ENCODE measurements at regions of chr6 and their contacts with region 1.

Region 1: DNA sequence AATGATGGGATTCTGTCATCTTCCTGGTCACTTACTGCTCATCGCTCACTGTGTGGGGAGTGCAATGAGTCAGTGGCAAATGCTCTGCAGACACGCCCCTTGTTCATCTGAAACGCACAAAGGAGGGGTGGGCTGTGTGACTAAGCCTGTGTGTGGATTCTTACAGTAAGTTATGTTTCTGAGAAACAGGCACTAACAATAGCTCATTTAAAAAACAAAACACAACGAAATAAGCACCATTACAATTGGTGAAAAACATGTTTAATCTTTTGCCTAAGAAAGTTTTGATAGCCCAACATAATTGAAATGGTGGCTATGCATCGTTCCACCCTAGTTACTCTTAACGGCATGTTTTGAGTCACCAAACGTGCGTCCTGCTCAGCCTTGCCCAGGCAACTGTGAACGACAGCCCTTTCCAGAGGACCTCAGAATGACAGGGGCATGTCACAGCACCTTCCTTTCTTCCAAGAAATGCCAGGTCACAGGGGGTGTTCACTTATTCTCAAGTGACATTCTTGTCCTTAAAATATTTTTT is 118.4 kb upstream of the SGK1 start:
- DNase-seq: peak; percentile 64
- H3K4me3 Mint-ChIP-seq: peak overlapping the region; percentile 54
- H3K27ac Mint-ChIP-seq: peak overlapping the region; percentile 96
- H3K4me1 Mint-ChIP-seq: peaks cover 37% of the 10 kb centered on the region
- H3K27me3 Mint-ChIP-seq: no peaks in the 10 kb centered on the region

Region 2: GRCh38 chr6:134288538-134289203 is 147.7 kb before region 1 on chr6:
- intact Hi-C with region 1: loop called (anchors 1 kb)
- DNase-seq: peak; percentile 15
- H3K4me3 Mint-ChIP-seq: peak overlapping the region; percentile 28
- H3K27ac Mint-ChIP-seq: peak overlapping the region; percentile 96
- H3K4me1 Mint-ChIP-seq: peaks cover 32% of the 10 kb centered on the region
- H3K27me3 Mint-ChIP-seq: no peaks in the 10 kb centered on the region

Region 3: DNA sequence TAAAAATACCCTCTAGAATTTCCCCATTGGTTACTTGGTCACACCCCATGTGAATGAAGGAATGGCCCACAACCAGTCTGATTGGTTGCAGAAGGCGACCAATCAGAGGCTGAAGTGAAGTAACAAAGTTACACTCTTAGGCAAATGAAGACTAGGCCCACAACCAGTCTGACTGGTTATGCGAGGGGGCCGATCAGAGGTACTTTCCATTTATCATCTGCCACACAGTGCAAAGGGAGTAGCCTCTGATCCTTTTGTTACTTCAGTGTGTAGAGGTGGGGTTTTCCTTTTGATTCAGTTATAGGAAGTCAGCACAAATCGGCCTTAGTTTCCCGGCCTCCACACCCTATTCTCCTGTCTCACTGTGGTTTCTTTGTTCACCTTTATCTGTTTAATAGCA is 57.3 kb before region 1 on chr6:
- intact Hi-C with region 1: loop called (anchors 1 kb)
- DNase-seq: peak; percentile 21
- H3K4me3 Mint-ChIP-seq: no peak overlapping the region
- H3K27ac Mint-ChIP-seq: peak overlapping the region; percentile 79
- H3K4me1 Mint-ChIP-seq: peaks cover 35% of the 10 kb centered on the region
- H3K27me3 Mint-ChIP-seq: no peaks in the 10 kb centered on the region

Region 4: DNA sequence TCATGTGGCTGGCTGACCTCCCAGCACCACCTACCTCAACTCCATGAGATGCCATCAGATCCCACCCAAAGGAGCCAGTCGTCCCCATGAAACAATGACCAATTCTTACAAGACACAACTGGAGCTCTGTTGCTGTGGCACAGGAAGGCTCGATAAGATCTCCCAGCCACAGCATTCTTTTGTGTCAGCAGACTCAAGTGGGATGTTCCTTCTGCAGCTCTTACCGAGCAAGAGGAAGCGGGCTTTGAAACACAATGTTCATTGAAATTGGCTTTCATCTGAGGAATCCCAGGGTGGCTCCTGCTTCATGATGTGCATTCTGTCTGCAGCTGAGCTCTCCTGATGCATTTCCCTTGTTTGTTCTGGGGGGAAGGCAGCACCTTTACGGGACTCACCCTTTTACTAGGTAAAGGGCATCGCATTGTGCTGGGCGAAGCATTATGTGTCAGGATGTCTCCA is 103.5 kb after region 1 on chr6:
- intact Hi-C with region 1: loop called (anchors 1 kb)
- DNase-seq: peak; percentile 19
- H3K4me3 Mint-ChIP-seq: peak overlapping the region; percentile 65
- H3K27ac Mint-ChIP-seq: peak overlapping the region; percentile 23
- H3K4me1 Mint-ChIP-seq: peaks cover 36% of the 10 kb centered on the region
- H3K27me3 Mint-ChIP-seq: no peaks in the 10 kb centered on the region

Region 5: GRCh38 chr6:134822920-134823709 is 386.8 kb after region 1 on chr6:
- intact Hi-C with region 1: loop called (anchors 2 kb)
- DNase-seq: no peak
- H3K4me3 Mint-ChIP-seq: no peak overlapping the region
- H3K27ac Mint-ChIP-seq: no peak overlapping the region
- H3K4me1 Mint-ChIP-seq: no peaks in the 10 kb centered on the region
- H3K27me3 Mint-ChIP-seq: no peaks in the 10 kb centered on the region

Region 6: DNA sequence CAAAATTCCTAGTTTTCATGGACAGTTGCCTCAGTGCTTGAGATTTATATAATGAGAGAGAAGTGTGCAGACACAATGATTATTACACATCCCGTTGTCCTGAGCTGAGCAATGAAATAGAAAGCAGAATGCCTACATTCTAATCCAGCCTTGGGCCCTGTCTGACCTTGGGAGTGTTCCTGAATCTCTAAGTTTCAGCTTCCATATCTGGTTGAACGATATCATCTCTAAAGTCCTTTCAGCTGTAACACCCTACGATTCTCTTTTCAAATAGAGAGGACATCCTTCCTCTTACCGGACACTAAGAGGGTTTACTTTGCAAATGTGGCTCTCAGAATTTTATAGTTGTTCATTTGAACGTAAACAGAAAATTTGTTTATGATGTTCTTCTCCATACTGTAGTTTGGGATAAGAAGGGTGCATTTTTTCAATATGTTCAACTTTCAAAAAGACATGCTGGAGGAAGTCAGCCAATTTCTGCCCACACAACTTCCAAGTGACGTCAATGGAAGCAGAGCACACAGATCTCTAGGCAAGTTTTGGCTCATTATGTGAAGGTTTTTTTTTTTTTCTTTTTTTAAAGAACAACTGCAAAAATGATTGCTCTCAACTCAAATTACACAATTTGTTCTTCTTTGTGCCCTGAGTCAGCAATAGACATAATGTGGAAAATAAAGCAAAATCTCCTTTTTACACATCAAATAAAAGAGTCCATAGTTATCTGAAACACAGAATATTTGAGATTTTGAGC is 1465.6 kb after region 1 on chr6:
- intact Hi-C with region 1: no loop called
- DNase-seq: no peak
- H3K4me3 Mint-ChIP-seq: peak overlapping the region; percentile 52
- H3K27ac Mint-ChIP-seq: peak overlapping the region; percentile 86
- H3K4me1 Mint-ChIP-seq: peaks cover 47% of the 10 kb centered on the region
- H3K27me3 Mint-ChIP-seq: no peaks in the 10 kb centered on the region

Measured in activated T-helper 2 cell treated with anti-CD3 and anti-CD28 coated beads, Interferon-gamma antibody, Interleukin-2, Interleukin-4, amounts not matched to agents 10 μg/mL and 5 μg/mL and 100 μg/mL, durations not matched to agents 14 hours and 24 hours and 36 hours (primary cell).